ENCODE measurements at regions of chr11 and their contacts with region 1.

Region 1: DNA sequence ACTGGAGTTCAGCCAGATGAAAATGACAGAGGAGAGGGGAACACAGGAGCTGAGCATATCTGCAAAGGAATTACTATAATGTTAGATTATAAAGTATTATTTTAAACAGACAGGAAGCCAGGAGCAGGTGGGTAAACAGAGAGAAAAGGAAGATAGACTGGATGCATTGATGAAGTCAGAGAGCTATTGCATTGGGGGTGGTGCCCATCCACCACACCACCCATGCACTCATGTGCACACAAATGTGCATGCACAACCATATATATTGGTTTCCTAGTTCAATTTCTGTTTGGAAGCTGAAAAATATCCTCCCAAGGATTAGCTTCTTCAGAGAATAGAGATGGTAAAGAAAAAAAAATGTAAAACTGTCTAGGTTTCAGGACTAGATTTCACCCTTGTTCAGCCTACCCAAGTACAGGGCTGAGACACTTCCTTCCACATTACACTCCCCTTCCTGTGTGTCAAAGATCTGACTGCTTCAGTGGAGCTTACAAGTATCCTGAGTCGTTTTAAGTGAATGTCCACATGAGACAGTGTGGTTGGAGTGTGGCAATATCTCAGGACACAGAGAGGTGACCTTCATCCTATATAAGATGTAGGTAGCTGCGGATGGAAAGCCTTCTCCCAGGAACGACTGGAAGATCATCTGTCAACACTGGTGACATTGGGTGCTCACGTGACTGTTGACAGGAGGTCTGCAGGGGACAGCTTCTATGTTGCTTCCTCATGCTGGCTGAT is 12.2 kb upstream of the SMPD1 start:
- DNase-seq: peak; percentile 34
- H3K4me3 Mint-ChIP-seq: peak overlapping the region; percentile 61
- H3K27ac Mint-ChIP-seq: peak overlapping the region; percentile 93
- H3K4me1 Mint-ChIP-seq: peaks cover 37% of the 10 kb centered on the region
- H3K27me3 Mint-ChIP-seq: peaks cover 4% of the 10 kb centered on the region

Region 2: DNA sequence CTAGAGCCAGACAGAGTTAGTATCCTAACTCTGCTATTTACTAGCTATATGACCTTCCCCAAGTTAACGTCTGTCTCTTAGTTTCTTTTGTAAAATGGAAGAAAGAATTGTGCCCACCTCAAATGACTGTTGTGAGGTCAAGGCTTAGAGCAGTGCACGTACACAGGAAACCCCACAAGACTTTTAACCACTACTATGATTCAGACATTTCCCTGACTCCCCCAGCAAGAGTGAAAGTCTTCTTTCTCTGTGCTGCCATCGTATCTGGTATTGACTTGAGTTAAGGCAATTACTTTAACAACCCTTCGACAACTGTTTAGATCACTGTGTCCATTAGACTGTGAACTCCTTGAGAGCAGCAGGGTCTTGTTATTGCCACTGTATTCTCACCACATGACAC is 181.7 kb before region 1 on chr11:
- CTCF ChIA-PET with region 1: no interaction called
- DNase-seq: no peak
- H3K4me3 Mint-ChIP-seq: no peak overlapping the region
- H3K27ac Mint-ChIP-seq: no peak overlapping the region
- H3K4me1 Mint-ChIP-seq: peaks cover 7% of the 10 kb centered on the region
- H3K27me3 Mint-ChIP-seq: peaks cover 11% of the 10 kb centered on the region

Region 3: GRCh38 chr11:6353367-6353987 is 24.6 kb before region 1 on chr11:
- CTCF ChIA-PET with region 1: interaction called, 12 read pairs
- DNase-seq: peak; percentile 64
- H3K4me3 Mint-ChIP-seq: no peak overlapping the region
- H3K27ac Mint-ChIP-seq: no peak overlapping the region
- H3K4me1 Mint-ChIP-seq: peaks cover 2% of the 10 kb centered on the region
- H3K27me3 Mint-ChIP-seq: peaks cover 11% of the 10 kb centered on the region

Region 4: GRCh38 chr11:6402561-6402981 is 24.5 kb after region 1 on chr11:
- CTCF ChIA-PET with region 1: interaction called, 38 read pairs
- DNase-seq: peak; percentile 93
- H3K4me3 Mint-ChIP-seq: peak overlapping the region; percentile 77
- H3K27ac Mint-ChIP-seq: peak overlapping the region; percentile 98
- H3K4me1 Mint-ChIP-seq: peaks cover 84% of the 10 kb centered on the region
- H3K27me3 Mint-ChIP-seq: peaks cover 4% of the 10 kb centered on the region

Region 5: GRCh38 chr11:6431861-6432260 is 53.8 kb after region 1 on chr11:
- CTCF ChIA-PET with region 1: interaction called, 563 read pairs
- DNase-seq: no peak
- H3K4me3 Mint-ChIP-seq: no peak overlapping the region
- H3K27ac Mint-ChIP-seq: no peak overlapping the region
- H3K4me1 Mint-ChIP-seq: peaks cover 4% of the 10 kb centered on the region
- H3K27me3 Mint-ChIP-seq: peaks cover 6% of the 10 kb centered on the region

Region 6: DNA sequence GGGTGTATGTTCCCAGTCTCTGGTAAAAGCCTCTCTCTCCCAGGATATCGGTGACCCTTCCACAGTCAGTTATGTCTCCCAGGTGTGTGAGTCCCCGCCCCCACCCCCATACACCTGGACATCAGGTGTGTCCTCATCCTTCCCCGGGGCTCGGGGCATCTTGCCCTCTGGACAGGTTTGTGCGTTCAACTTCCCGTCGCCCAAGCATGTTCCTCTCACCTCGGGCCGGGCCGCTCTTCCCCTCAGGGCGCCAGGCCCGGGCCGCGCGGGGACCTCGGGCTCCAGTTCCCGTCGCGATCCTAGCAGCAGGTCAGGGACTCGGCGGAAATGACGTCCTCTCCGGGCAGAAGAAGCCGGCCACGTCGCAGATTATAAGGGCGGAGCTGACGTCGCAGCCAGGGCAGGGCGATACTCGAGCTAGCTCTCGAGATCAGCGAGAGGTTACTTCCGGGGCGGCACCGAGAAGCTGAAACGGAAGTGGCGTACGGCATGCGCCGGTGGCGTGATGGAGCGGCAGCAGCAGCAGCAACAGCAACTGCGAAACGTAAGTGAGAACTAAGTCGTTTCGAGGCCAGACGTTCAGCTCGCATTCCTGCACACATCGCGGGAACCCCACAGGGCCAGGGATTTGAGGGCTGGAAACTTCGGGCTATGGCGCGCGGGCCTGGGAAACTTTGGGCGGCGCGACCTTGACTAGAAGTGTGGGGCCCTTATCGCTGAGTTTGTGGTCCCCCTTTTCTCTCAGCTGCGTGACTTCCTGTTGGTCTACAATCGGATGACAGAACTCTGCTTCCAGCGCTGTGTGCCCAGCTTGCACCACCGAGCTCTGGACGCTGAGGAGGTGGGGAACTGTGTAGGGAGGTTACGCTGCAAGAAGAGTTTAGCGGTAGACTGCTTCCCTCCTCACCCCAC is 103.2 kb after region 1 on chr11 and contains the starts of genes ARFIP2 and TIMM10B:
- CTCF ChIA-PET with region 1: interaction called, 21 read pairs
- DNase-seq: peak; percentile 99
- H3K4me3 Mint-ChIP-seq: peak within 1 kb of the TSS; percentile 82
- H3K27ac Mint-ChIP-seq: peak within 1 kb of the TSS; percentile 96
- H3K4me1 Mint-ChIP-seq: peaks cover 42% of the 10 kb centered on the region
- H3K27me3 Mint-ChIP-seq: no peaks in the 10 kb centered on the region

Region 7: GRCh38 chr11:6531267-6531752 is 153.2 kb after region 1 on chr11:
- CTCF ChIA-PET with region 1: interaction called, 32 read pairs
- DNase-seq: peak; percentile 37
- H3K4me3 Mint-ChIP-seq: no peak overlapping the region
- H3K27ac Mint-ChIP-seq: no peak overlapping the region
- H3K4me1 Mint-ChIP-seq: peaks cover 13% of the 10 kb centered on the region
- H3K27me3 Mint-ChIP-seq: no peaks in the 10 kb centered on the region

Region 8: DNA sequence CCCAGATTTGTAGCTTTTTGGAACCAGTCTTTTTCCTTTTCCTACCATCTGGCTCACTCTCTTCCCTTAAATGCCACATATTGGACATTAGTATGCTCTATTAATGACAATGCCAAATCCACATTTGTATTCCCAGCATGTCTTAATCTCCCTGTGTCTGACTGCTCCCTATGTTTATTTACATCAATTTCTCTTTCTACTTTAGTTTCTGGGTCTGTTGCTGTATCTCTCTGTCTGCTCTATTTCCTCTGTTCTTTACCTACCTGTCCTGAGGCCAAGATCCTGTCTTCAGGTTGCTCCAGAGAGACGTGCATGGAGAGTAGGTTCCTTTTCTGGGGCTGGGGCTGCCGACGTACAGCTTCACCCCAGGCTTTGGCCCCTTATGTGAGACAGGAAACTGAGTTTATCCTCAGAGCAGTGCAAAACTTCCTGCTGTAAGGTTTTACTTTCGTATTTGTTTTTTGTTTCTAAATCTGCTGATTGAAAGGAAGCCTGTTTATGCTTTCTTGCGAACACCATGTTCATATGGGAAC is 368.1 kb after region 1 on chr11:
- CTCF ChIA-PET with region 1: interaction called, 10 read pairs
- DNase-seq: peak; percentile 67
- H3K4me3 Mint-ChIP-seq: no peak overlapping the region
- H3K27ac Mint-ChIP-seq: no peak overlapping the region
- H3K4me1 Mint-ChIP-seq: peaks cover 39% of the 10 kb centered on the region
- H3K27me3 Mint-ChIP-seq: no peaks in the 10 kb centered on the region